HEK293 (cell line): ENCODE measurements at regions of chr1 and their contacts with region 1.

Region 1: DNA sequence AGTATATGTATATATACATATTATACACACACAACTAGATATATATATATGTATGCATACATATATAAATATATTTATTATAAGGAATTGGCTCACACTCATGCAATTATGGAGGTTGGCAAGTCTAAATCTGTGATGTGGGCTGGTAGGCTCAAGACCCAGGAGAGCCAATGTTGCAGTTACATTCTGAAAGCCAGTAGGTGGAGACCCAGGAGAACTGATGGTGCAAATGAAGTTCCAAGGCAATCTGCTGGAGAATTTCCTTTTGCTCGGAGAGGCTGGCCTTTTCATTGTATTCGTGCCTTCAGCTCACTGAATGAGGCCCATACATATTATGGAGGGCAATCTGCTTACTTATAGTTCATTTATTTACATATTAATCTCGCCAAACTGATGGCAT is 9.4 kb downstream of the IVL start:
- H3K4me3 ChIP-seq: no peak overlapping the region
- H3K27ac ChIP-seq: no peak overlapping the region
- H3K4me1 ChIP-seq: no peaks in the 10 kb centered on the region
- CTCF ChIP-seq: no peak

Region 2: DNA sequence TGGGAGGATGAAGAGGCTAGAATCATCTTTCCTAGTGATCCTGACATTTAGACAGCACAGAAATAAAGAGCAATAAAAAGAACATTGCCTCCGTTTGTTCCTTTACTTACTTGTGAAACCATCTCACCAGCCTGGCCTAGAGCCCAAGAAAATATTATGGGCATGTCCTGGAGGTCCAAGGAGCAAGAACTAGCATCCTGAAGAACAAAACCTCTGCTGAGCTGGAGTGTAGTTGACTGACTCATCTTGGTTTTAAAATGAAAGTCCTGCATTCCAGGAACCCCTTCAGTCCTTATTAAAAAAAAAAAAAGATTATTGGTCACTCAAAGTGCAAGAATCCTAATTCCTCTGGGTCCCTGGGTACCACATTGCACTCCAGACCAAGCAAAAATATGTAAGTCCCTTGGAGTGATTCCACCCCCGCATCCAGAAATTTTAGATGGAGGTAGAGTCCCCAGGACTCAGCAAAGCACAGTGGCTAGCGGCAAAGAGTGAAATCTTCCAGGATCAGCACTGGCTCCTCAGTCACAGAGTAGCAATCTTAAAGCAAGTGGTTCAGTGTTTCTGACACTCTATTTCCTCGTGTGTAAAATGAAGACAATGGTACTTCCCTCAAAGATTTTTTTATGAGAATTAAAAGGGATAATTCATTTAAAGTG is 32.7 kb before region 1 on chr1:
- CTCF ChIA-PET with region 1: no interaction called
- POLR2A ChIA-PET with region 1: no interaction called
- H3K4me3 ChIP-seq: no peak overlapping the region
- H3K27ac ChIP-seq: no peak overlapping the region
- H3K4me1 ChIP-seq: no peaks in the 10 kb centered on the region
- CTCF ChIP-seq: no peak

Region 3: DNA sequence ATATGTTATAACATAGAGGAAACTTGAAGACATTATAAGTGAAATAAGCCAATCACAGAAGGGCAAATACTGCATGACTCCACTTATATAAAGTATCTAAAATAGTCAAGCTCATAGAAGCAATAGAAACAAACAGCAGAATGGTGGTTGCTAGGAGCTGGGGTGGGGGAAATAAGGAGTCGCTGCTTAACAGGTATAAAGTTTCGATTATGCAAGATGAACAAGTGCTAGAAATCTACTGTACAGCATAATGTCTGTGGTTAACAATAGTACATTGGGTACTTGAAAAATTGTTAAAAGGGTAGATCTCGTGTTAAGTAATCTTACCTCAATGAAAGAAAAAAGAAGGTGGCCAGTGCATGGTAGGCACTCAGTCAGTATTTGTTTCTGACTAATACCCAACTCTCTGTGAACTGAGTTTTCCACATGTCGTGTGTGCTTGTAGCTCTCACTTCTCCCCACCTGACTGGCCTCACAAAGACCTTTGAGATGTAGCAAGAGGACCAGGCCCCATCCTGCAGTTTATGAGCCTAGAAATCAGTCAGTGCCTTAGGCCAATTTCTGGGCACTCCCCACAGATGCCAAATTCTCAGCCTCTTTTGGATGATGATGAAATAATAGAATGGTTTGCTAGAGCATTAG is 14.5 kb after region 1 on chr1:
- CTCF ChIA-PET with region 1: interaction called, 11 read pairs
- POLR2A ChIA-PET with region 1: no interaction called
- H3K4me3 ChIP-seq: no peak overlapping the region
- H3K27ac ChIP-seq: no peak overlapping the region
- H3K4me1 ChIP-seq: no peaks in the 10 kb centered on the region
- CTCF ChIP-seq: no peak

Region 4: DNA sequence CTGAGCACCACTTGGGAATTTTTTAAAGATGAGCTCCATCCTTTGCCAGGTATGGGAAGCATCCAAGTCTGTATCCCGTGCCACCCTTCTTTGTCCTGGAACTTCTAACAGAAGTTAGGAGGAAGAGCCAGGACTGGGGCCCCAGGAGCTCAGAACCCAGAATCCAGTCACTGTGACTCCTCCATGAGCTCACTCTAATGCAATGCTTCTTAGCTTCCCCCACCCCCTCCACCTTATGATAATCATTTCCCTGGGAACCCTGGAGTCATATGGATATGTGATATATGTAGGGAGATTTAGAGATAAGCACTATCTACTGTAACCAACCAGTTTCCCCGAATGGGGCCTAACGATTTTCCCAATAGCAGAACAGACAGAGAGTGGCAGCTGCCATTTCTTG is 28.5 kb after region 1 on chr1:
- CTCF ChIA-PET with region 1: no interaction called
- POLR2A ChIA-PET with region 1: no interaction called
- H3K4me3 ChIP-seq: no peak overlapping the region
- H3K27ac ChIP-seq: no peak overlapping the region
- H3K4me1 ChIP-seq: no peaks in the 10 kb centered on the region
- CTCF ChIP-seq: no peak